GM12878 (cell line): ENCODE measurements at regions of chr12 and their contacts with region 1.

Region 1: GRCh38 chr12:68040450-68041075 is 51.3 kb downstream of the IFNG-AS1 start:
- DNase-seq: peak; percentile 26
- ATAC-seq: peak; percentile 76
- H3K4me3 ChIP-seq: no peak overlapping the region
- H3K27ac ChIP-seq: no peak overlapping the region
- H3K4me1 ChIP-seq: peaks cover 11% of the 10 kb centered on the region
- H3K27me3 ChIP-seq: no peaks in the 10 kb centered on the region
- CTCF ChIP-seq: peak; percentile 80 to 89 (median 85)
- EP300 ChIP-seq: no peak
- POLR2A ChIP-seq: no peak
- RAD21 ChIP-seq: peak; percentile 95

Region 2: GRCh38 chr12:67991158-67991557 is 49.4 kb before region 1 on chr12:
- CTCF ChIA-PET with region 1: interaction called, 13 read pairs
- POLR2A ChIA-PET with region 1: interaction called, 7 read pairs
- RAD21 ChIA-PET with region 1: interaction called, 5 read pairs
- SMC1A ChIA-PET with region 1: interaction called, 10 read pairs
- in situ Hi-C with region 1: no loop called
- intact Hi-C with region 1: no loop called
- DNase-seq: no peak
- ATAC-seq: peak; percentile 85
- H3K4me3 ChIP-seq: no peak overlapping the region
- H3K27ac ChIP-seq: peak overlapping the region; percentile 54; the same call in 1 of the 2 replicates
- H3K4me1 ChIP-seq: peaks cover 31% of the 10 kb centered on the region
- H3K27me3 ChIP-seq: no peaks in the 10 kb centered on the region
- CTCF ChIP-seq: no peak
- EP300 ChIP-seq: no peak
- POLR2A ChIP-seq: no peak
- RAD21 ChIP-seq: no peak

Region 3: DNA sequence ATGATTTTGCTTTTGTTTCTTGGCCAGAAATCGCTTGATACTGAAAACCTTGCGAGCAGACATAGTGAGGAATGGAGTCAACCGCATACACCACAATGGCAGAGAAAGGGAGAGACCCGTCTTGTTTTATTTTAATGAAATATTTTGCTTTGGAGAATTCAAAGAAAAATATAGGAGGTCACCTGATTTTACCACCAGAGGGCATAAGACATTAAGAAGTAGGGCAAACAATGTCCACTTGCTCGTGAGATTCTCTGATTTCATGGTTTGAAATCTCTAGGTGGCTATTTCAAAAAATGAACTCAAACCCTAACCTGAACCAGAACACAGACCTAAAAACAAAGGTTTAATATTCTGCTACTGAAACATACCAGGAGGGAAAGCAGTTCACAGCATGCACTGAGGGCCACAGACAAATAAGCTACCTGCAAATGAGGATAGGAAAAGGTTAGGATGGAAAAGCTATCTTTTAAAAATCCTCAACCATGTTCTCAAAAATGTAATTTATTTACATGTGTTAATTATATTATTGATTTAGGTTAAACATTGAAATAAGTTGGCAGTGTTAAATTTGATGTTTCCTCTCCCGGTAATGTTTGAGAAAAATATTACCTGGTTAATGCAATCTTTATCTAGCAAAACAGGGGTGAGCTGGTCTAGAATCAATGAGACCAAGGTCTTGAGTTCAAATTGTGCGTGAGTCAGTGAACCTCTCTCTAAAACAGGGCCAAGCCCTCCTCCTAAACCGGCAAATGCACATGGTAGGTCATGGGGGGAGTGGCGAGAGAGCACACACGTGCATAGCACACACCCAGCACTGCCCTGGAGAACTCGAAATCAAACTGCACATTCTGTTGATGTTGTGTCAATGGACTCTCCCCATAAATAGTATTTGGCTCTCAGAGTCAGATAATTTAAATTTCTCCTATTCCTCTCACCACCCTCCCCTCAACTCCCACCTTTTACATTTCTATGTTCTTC is 38.8 kb before region 1 on chr12:
- CTCF ChIA-PET with region 1: interaction called, 39 read pairs
- POLR2A ChIA-PET with region 1: no interaction called
- RAD21 ChIA-PET with region 1: interaction called, 6 read pairs
- SMC1A ChIA-PET with region 1: interaction called, 8 read pairs
- in situ Hi-C with region 1: no loop called
- intact Hi-C with region 1: no loop called
- DNase-seq: no peak
- ATAC-seq: peak; percentile 64
- H3K4me3 ChIP-seq: no peak overlapping the region
- H3K27ac ChIP-seq: no peak overlapping the region
- H3K4me1 ChIP-seq: no peaks in the 10 kb centered on the region
- H3K27me3 ChIP-seq: no peaks in the 10 kb centered on the region
- CTCF ChIP-seq: peak; percentile 39 to 44 (median 40); a peak in 5 of 6 replicates
- EP300 ChIP-seq: no peak
- POLR2A ChIP-seq: no peak
- RAD21 ChIP-seq: peak; percentile 51

Region 4: GRCh38 chr12:68012712-68013111 is 27.9 kb before region 1 on chr12:
- CTCF ChIA-PET with region 1: interaction called, 13 read pairs
- POLR2A ChIA-PET with region 1: no interaction called
- RAD21 ChIA-PET with region 1: interaction called, 3 read pairs
- SMC1A ChIA-PET with region 1: interaction called, 5 read pairs
- in situ Hi-C with region 1: no loop called
- intact Hi-C with region 1: no loop called
- DNase-seq: peak; percentile 33
- ATAC-seq: peak; percentile 74
- H3K4me3 ChIP-seq: no peak overlapping the region
- H3K27ac ChIP-seq: no peak overlapping the region
- H3K4me1 ChIP-seq: peaks cover 4% of the 10 kb centered on the region; the same call in 1 of the 2 replicates
- H3K27me3 ChIP-seq: no peaks in the 10 kb centered on the region
- CTCF ChIP-seq: no peak
- EP300 ChIP-seq: no peak
- POLR2A ChIP-seq: no peak
- RAD21 ChIP-seq: no peak

Region 5: GRCh38 chr12:68113644-68114043 is 73.1 kb after region 1 on chr12:
- CTCF ChIA-PET with region 1: interaction called, 21 read pairs
- POLR2A ChIA-PET with region 1: no interaction called
- RAD21 ChIA-PET with region 1: interaction called, 4 read pairs
- SMC1A ChIA-PET with region 1: interaction called, 6 read pairs
- in situ Hi-C with region 1: no loop called
- intact Hi-C with region 1: no loop called
- DNase-seq: no peak
- ATAC-seq: peak; percentile 79
- H3K4me3 ChIP-seq: no peak overlapping the region
- H3K27ac ChIP-seq: no peak overlapping the region
- H3K4me1 ChIP-seq: peaks cover 3% of the 10 kb centered on the region; the same call in 1 of the 2 replicates
- H3K27me3 ChIP-seq: no peaks in the 10 kb centered on the region
- CTCF ChIP-seq: peak; percentile 42 to 67 (median 63)
- EP300 ChIP-seq: no peak
- POLR2A ChIP-seq: no peak
- RAD21 ChIP-seq: peak; percentile 38; the same call in 1 of the 2 replicates

Region 6: DNA sequence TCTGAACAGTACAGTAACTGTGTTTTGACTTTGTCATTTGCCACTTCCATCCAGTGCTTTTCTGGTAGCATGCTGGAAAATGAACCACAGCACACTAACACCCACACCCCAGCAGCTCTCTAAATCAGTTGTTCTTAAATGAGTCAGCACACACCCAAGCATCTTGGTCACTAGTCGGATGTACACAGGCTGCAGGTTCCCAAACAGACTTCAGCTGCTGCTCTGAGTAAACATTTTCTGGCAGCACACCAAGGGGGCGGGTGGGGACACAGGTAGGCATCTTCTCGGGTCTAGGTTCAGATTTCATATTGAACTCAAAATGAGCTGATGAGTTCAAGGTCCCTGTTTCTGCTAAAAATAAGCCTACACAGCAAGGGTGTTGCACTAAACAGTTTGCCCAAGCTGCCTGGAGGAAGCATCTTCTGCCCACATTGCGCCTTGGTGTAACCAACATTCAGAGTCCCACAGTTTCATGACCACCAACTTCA is 79.2 kb after region 1 on chr12:
- CTCF ChIA-PET with region 1: interaction called, 21 read pairs
- POLR2A ChIA-PET with region 1: interaction called, 3 read pairs
- RAD21 ChIA-PET with region 1: interaction called, 7 read pairs
- SMC1A ChIA-PET with region 1: interaction called, 5 read pairs
- in situ Hi-C with region 1: no loop called
- intact Hi-C with region 1: no loop called
- DNase-seq: peak; percentile 73
- ATAC-seq: peak; percentile 93
- H3K4me3 ChIP-seq: no peak overlapping the region
- H3K27ac ChIP-seq: peak overlapping the region; percentile 1; the same call in 1 of the 2 replicates
- H3K4me1 ChIP-seq: peaks cover 12% of the 10 kb centered on the region
- H3K27me3 ChIP-seq: no peaks in the 10 kb centered on the region
- CTCF ChIP-seq: no peak
- EP300 ChIP-seq: peak in 1 of 2 experiments; percentile 39; a peak in 2 of 4 replicates
- POLR2A ChIP-seq: no peak
- RAD21 ChIP-seq: no peak

Region 7: DNA sequence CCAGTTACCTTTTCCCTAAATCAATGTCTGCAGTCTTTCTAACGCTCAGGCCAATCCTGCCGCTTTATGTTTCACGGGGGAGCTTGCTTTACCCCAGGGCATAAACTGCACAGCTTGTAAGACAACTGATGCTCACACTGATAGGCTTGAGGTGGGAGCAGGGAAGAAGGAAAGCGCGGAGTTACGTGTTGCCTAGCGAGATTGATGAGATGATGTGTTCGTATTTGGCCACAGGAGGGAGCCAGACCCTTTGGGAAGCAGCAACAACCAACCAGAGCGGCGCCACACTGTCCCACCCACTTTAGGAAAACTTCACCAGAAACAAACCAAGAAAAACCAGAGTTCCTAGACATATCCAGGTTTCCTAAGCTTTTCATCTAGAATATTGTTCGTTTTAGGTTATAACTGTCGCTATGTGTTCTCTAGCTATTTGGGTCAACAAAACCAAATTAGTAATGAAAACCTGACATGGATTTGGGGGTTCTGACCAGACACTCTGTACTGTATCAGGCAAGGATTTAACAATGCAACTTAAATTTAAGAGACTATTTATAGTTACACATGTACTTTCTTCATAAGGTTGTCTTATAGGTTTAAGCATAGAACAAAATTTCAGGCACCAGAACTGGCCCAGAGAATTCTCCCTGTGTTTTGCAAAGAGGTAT is 182.7 kb after region 1 on chr12:
- CTCF ChIA-PET with region 1: interaction called, 32 read pairs
- POLR2A ChIA-PET with region 1: no interaction called
- RAD21 ChIA-PET with region 1: interaction called, 18 read pairs
- SMC1A ChIA-PET with region 1: interaction called, 43 read pairs
- in situ Hi-C with region 1: no loop called
- intact Hi-C with region 1: loop called (anchors 1 kb)
- DNase-seq: peak; percentile 71
- ATAC-seq: peak; percentile 100
- H3K4me3 ChIP-seq: no peak overlapping the region
- H3K27ac ChIP-seq: no peak overlapping the region
- H3K4me1 ChIP-seq: no peaks in the 10 kb centered on the region
- H3K27me3 ChIP-seq: no peaks in the 10 kb centered on the region; a peak in 1 of 4 replicates
- CTCF ChIP-seq: peak; percentile 79 to 84 (median 81)
- EP300 ChIP-seq: no peak
- POLR2A ChIP-seq: no peak
- RAD21 ChIP-seq: peak; percentile 98

Region 8: GRCh38 chr12:68406134-68406594 is 365.6 kb after region 1 on chr12:
- CTCF ChIA-PET with region 1: no interaction called
- POLR2A ChIA-PET with region 1: no interaction called
- RAD21 ChIA-PET with region 1: no interaction called
- SMC1A ChIA-PET with region 1: no interaction called
- in situ Hi-C with region 1: no loop called
- intact Hi-C with region 1: no loop called
- DNase-seq: no peak
- ATAC-seq: no peak
- H3K4me3 ChIP-seq: no peak overlapping the region
- H3K27ac ChIP-seq: no peak overlapping the region
- H3K4me1 ChIP-seq: no peaks in the 10 kb centered on the region
- H3K27me3 ChIP-seq: no peaks in the 10 kb centered on the region
- CTCF ChIP-seq: no peak
- EP300 ChIP-seq: no peak
- POLR2A ChIP-seq: no peak
- RAD21 ChIP-seq: no peak